Ascending aorta (tissue), 2 donors: ENCODE measurements at regions of chr15 and their contacts with region 1.

Region 1: GRCh38 chr15:85330901-85331588 is 49.4 kb upstream of the AKAP13 start:
- DNase-seq: peak; percentile 67 to 95
- H3K4me3 ChIP-seq: no peak overlapping the region
- H3K27ac ChIP-seq: peak overlapping the region; percentile 80
- H3K4me1 ChIP-seq: peaks cover 2 to 9% of the 10 kb centered on the region in 2 donors
- H3K27me3 ChIP-seq: no peaks in the 10 kb centered on the region
- CTCF ChIP-seq: peak; percentile 70 to 85 (median 82)

Region 2: DNA sequence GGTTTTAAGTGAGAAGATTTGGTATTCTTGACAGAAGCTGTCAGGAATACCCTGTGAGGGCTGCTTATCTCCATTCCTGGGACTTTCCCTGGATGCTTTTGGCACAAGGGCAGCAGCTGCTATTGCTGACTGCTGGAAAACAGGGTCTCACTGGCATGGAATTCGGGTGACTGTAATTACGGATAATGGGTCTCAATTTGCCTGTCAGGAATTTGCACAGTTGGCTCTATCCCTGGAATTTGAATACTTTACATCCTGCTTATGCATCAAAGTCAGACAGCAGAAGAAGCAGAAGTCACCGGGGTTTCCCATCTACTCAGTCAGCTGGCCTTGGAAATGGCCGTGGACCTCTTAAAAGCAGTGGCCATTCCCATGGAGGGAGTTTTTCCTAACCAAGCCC is 23.4 kb after region 1 on chr15:
- intact Hi-C with region 1: loop called (anchors 2 kb)
- DNase-seq: no peak
- H3K4me3 ChIP-seq: no peak overlapping the region
- H3K27ac ChIP-seq: no peak overlapping the region
- H3K4me1 ChIP-seq: peaks cover 3 to 5% of the 10 kb centered on the region in 2 donors
- H3K27me3 ChIP-seq: no peaks in the 10 kb centered on the region
- CTCF ChIP-seq: no peak

Region 3: DNA sequence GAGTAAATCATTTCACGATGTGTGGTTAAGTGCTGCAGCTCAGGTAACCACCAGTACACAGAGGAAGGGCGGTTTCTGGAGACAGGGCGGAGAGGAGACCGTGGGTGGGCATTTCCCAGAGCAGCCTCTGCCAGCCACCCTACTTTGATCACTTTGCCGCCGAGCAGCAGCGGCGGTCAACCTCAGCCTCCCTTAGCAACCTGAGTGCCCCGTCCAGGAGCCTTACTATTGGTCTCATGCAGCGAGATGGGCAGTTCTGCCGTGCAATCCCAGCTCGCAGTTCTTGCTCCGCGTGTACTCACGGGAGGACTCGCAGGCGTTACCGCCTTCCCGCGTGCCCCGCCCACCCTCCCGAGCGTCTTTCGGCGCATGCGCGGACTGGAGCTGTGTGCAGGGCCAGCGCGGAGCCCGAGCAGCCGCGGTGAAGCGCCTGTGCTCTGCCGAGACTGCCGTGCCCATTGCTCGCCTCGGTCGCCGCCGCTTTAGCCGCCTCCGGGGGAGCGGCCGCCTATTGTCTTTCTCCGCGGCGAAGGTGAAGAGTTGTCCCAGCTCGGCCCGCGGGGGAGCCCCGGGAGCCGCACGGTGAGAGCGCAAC is 49.3 kb after region 1 on chr15 and contains the start of gene AKAP13:
- intact Hi-C with region 1: loop called (anchors 1 kb)
- DNase-seq: peak; percentile 96 to 98
- H3K4me3 ChIP-seq: peak within 1 kb of the TSS; percentile 80 to 90
- H3K27ac ChIP-seq: peak within 1 kb of the TSS; percentile 92
- H3K4me1 ChIP-seq: peaks cover 0 to 10% of the 10 kb centered on the region in 2 donors
- H3K27me3 ChIP-seq: no peaks in the 10 kb centered on the region
- CTCF ChIP-seq: no peak
- total RNA-seq, gene AKAP13: 74.3 TPM

Region 4: GRCh38 chr15:85412956-85413854 is 82.2 kb after region 1 on chr15:
- intact Hi-C with region 1: loop called (anchors 2 kb)
- DNase-seq: peak; percentile 59 to 78
- H3K4me3 ChIP-seq: no peak overlapping the region
- H3K27ac ChIP-seq: peak overlapping the region in 1 of 2 donors; percentile 30
- H3K4me1 ChIP-seq: peaks cover 0 to 19% of the 10 kb centered on the region in 2 donors
- H3K27me3 ChIP-seq: no peaks in the 10 kb centered on the region
- CTCF ChIP-seq: peak in 1 of 3 experiments; percentile 8

Region 5: GRCh38 chr15:85504749-85505676 is 174.0 kb after region 1 on chr15:
- intact Hi-C with region 1: loop called (anchors 2 kb)
- DNase-seq: peak in 1 of 2 donors; percentile 71
- H3K4me3 ChIP-seq: no peak overlapping the region
- H3K27ac ChIP-seq: no peak overlapping the region
- H3K4me1 ChIP-seq: peaks cover 0 to 6% of the 10 kb centered on the region in 2 donors
- H3K27me3 ChIP-seq: no peaks in the 10 kb centered on the region
- CTCF ChIP-seq: peak; percentile 13 to 67 (median 60)